CD8-positive, alpha-beta T cell (primary cell): ENCODE measurements at regions of chr2 and their contacts with region 1.

Region 1: DNA sequence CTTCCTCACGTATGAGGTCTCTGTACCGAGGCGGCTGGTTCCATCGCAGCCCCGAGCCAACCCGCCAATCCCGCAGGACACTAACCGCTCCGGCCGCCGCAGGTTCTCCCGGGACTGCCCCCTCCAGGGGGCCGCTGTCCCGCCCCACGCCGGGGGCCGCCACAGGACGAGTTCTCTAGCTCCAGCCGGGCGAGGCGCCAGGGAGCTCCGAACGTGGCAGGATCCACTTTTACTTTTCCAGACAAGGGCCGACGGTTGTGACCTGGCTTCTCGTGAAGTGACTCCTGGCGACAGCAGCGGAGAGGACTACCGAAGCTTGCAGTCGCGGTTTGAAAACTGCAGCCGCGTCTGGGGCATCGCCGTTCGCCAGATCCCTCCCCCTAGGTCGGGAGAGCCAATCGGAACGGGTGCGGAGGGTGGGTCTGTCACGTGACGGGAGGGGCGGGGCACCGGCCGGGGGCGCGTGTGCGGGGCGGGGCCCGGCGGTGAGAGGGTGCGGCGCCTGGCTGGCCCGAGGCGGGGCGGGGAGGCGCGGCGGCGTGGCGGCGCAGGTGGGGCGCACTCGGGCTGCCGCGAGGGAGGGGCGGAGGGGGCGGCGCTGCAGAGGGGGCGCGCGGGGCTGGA is at the start of gene STK17B:
- DNase-seq: peak; percentile 96 to 98 (median 97)
- ATAC-seq: peak; percentile 63
- H3K4me3 ChIP-seq: peak within 1 kb of the TSS; percentile 82 to 87
- H3K4me3 Mint-ChIP-seq: peak within 1 kb of the TSS; percentile 97
- H3K27ac ChIP-seq: peak within 1 kb of the TSS; percentile 91 to 98
- H3K27ac Mint-ChIP-seq: peak within 1 kb of the TSS; percentile 98
- H3K4me1 ChIP-seq: peaks cover 39% of the 10 kb centered on the region
- H3K4me1 Mint-ChIP-seq: peaks cover 42% of the 10 kb centered on the region
- H3K27me3 ChIP-seq: no peaks in the 10 kb centered on the region
- H3K27me3 Mint-ChIP-seq: no peaks in the 10 kb centered on the region
- CTCF ChIP-seq: no peak
- total RNA-seq, gene STK17B: 582 to 601 TPM

Region 2: GRCh38 chr2:195656859-195657633 is 514.3 kb before region 1 on chr2 and contains the start of gene SLC39A10:
- CTCF ChIA-PET with region 1: no interaction called
- POLR2A ChIA-PET with region 1: no interaction called
- intact Hi-C with region 1: loop called (anchors 2 to 10 kb)
- DNase-seq: peak; percentile 94 to 100 (median 99)
- ATAC-seq: peak; percentile 83
- H3K4me3 ChIP-seq: peak within 1 kb of the TSS; percentile 57 to 96
- H3K4me3 Mint-ChIP-seq: peak within 1 kb of the TSS; percentile 96
- H3K27ac ChIP-seq: peak within 1 kb of the TSS; percentile 98
- H3K27ac Mint-ChIP-seq: peak within 1 kb of the TSS; percentile 100
- H3K4me1 ChIP-seq: peaks cover 12% of the 10 kb centered on the region
- H3K4me1 Mint-ChIP-seq: peaks cover 32% of the 10 kb centered on the region
- H3K27me3 ChIP-seq: no peaks in the 10 kb centered on the region
- H3K27me3 Mint-ChIP-seq: no peaks in the 10 kb centered on the region
- CTCF ChIP-seq: no peak
- total RNA-seq, gene SLC39A10: 35.0 to 36.3 TPM

Region 3: GRCh38 chr2:195923889-195924288 is 247.5 kb before region 1 on chr2:
- CTCF ChIA-PET with region 1: no interaction called
- POLR2A ChIA-PET with region 1: no interaction called
- intact Hi-C with region 1: no loop called
- DNase-seq: no peak
- ATAC-seq: no peak
- H3K4me3 ChIP-seq: no peak overlapping the region
- H3K4me3 Mint-ChIP-seq: no peak overlapping the region
- H3K27ac ChIP-seq: no peak overlapping the region
- H3K27ac Mint-ChIP-seq: no peak overlapping the region
- H3K4me1 ChIP-seq: no peaks in the 10 kb centered on the region
- H3K4me1 Mint-ChIP-seq: no peaks in the 10 kb centered on the region
- H3K27me3 ChIP-seq: no peaks in the 10 kb centered on the region
- H3K27me3 Mint-ChIP-seq: no peaks in the 10 kb centered on the region
- CTCF ChIP-seq: no peak

Region 4: DNA sequence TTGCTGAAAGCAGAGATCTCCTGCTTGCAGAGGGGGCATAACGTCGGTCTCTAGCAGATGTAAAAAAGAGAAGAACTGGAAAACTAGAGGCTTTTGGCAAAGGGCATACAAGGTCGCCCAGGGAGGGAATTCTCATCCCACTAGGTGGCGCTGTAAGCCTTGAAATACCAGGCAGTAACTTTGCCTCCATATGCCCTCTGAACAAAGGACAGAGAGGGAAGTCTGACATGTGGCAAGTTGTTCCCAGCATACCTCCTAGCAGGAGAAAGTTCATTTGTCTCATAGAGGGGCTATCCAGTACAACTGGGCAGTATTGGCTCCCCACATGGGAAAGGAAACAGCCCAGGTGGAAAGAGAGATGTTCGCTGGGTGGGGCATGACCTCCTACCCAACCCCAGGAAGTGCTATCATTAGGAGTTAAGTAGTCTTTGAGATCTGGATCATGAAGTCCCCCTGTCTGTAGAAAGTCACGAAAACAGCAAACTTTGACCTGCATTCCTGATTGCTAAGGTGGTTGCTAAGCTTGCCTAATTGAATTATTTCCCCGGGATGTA is 39.9 kb before region 1 on chr2:
- CTCF ChIA-PET with region 1: interaction called, 11 read pairs
- POLR2A ChIA-PET with region 1: interaction called, 7 read pairs
- intact Hi-C with region 1: loop called in 1 of 2 experiments (anchors 5 kb)
- DNase-seq: peak in 8 of 9 experiments; percentile 43 to 78 (median 64)
- ATAC-seq: peak; percentile 24
- H3K4me3 ChIP-seq: no peak overlapping the region
- H3K4me3 Mint-ChIP-seq: no peak overlapping the region
- H3K27ac ChIP-seq: peak overlapping the region in 1 of 2 experiments; percentile 52
- H3K27ac Mint-ChIP-seq: peak overlapping the region; percentile 83
- H3K4me1 ChIP-seq: no peaks in the 10 kb centered on the region
- H3K4me1 Mint-ChIP-seq: peaks cover 31% of the 10 kb centered on the region
- H3K27me3 ChIP-seq: no peaks in the 10 kb centered on the region
- H3K27me3 Mint-ChIP-seq: no peaks in the 10 kb centered on the region
- CTCF ChIP-seq: peak; percentile 49

Region 5: GRCh38 chr2:196160101-196160500 is 11.3 kb before region 1 on chr2:
- CTCF ChIA-PET with region 1: interaction called, 11 read pairs
- POLR2A ChIA-PET with region 1: interaction called, 40 read pairs
- intact Hi-C with region 1: loop called in 1 of 2 experiments (anchors 1 kb)
- DNase-seq: peak in 7 of 9 experiments; percentile 49 to 94 (median 69)
- ATAC-seq: peak; percentile 46
- H3K4me3 ChIP-seq: peak overlapping the region; percentile 22 to 45
- H3K4me3 Mint-ChIP-seq: peak overlapping the region; percentile 58
- H3K27ac ChIP-seq: peak overlapping the region; percentile 75 to 91
- H3K27ac Mint-ChIP-seq: peak overlapping the region; percentile 73
- H3K4me1 ChIP-seq: peaks cover 86% of the 10 kb centered on the region
- H3K4me1 Mint-ChIP-seq: peaks cover 82% of the 10 kb centered on the region
- H3K27me3 ChIP-seq: no peaks in the 10 kb centered on the region
- H3K27me3 Mint-ChIP-seq: no peaks in the 10 kb centered on the region
- CTCF ChIP-seq: no peak

Region 6: GRCh38 chr2:196205881-196206435 is 34.6 kb after region 1 on chr2:
- CTCF ChIA-PET with region 1: interaction called, 8 read pairs
- POLR2A ChIA-PET with region 1: interaction called, 21 read pairs
- intact Hi-C with region 1: loop called (anchors 1 to 2 kb)
- DNase-seq: no peak
- ATAC-seq: no peak
- H3K4me3 ChIP-seq: no peak overlapping the region
- H3K4me3 Mint-ChIP-seq: no peak overlapping the region
- H3K27ac ChIP-seq: no peak overlapping the region
- H3K27ac Mint-ChIP-seq: no peak overlapping the region
- H3K4me1 ChIP-seq: peaks cover 31% of the 10 kb centered on the region
- H3K4me1 Mint-ChIP-seq: peaks cover 61% of the 10 kb centered on the region
- H3K27me3 ChIP-seq: no peaks in the 10 kb centered on the region
- H3K27me3 Mint-ChIP-seq: no peaks in the 10 kb centered on the region
- CTCF ChIP-seq: no peak

Region 7: DNA sequence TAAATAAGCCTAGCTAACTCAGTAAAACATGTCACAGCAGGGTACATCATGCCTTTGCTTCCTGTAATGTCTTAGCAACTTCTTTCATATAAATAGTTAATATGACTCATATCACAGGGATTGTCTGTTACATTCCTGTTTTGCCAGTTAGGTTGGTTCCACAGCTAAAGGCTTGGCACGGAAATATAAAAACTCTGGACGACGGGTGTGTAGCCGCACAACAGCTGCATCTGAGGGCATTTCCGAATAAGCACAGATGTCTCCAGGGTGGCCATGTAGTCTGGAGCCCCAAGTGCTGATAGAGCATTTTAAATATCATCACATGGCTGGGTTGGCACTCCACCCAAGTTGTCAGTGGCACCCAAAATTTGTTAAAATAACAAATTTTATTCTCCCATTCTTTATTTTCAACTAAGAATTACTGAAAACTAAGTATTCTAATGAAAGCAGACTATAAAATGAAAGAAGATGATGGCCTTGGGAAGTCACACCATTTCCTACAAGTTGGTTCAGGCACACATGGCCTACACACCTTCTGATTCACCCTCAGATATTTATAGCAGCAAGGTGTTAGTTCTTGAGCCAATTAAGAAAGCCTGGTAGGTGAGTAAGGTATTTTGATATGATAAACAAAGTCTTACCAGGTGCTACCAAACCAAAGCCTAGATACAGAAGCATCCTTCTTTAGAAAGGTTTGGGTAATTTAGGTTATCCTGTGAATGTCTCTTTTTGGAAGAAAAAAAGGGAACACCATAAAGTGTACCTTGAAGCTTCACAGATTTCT is 61.9 kb after region 1 on chr2:
- CTCF ChIA-PET with region 1: interaction called, 8 read pairs
- POLR2A ChIA-PET with region 1: interaction called, 31 read pairs
- intact Hi-C with region 1: no loop called
- DNase-seq: peak in 2 of 9 experiments; percentile 16 to 39
- ATAC-seq: no peak
- H3K4me3 ChIP-seq: no peak overlapping the region
- H3K4me3 Mint-ChIP-seq: no peak overlapping the region
- H3K27ac ChIP-seq: peak overlapping the region; percentile 31 to 66
- H3K27ac Mint-ChIP-seq: peak overlapping the region; percentile 91
- H3K4me1 ChIP-seq: peaks cover 85% of the 10 kb centered on the region
- H3K4me1 Mint-ChIP-seq: peaks cover 86% of the 10 kb centered on the region
- H3K27me3 ChIP-seq: no peaks in the 10 kb centered on the region
- H3K27me3 Mint-ChIP-seq: no peaks in the 10 kb centered on the region
- CTCF ChIP-seq: no peak

Region 8: GRCh38 chr2:196277002-196277401 is 105.6 kb after region 1 on chr2:
- CTCF ChIA-PET with region 1: interaction called, 58 read pairs
- POLR2A ChIA-PET with region 1: interaction called, 23 read pairs
- intact Hi-C with region 1: loop called (anchors 1 to 2 kb)
- DNase-seq: peak in 4 of 9 experiments; percentile 28 to 78 (median 56)
- ATAC-seq: peak; percentile 55
- H3K4me3 ChIP-seq: no peak overlapping the region
- H3K4me3 Mint-ChIP-seq: no peak overlapping the region
- H3K27ac ChIP-seq: no peak overlapping the region
- H3K27ac Mint-ChIP-seq: peak overlapping the region; percentile 72
- H3K4me1 ChIP-seq: peaks cover 38% of the 10 kb centered on the region
- H3K4me1 Mint-ChIP-seq: peaks cover 39% of the 10 kb centered on the region
- H3K27me3 ChIP-seq: no peaks in the 10 kb centered on the region
- H3K27me3 Mint-ChIP-seq: no peaks in the 10 kb centered on the region
- CTCF ChIP-seq: peak; percentile 85